ENCODE measurements at regions of chr11 and their contacts with region 1.

Region 1: GRCh38 chr11:8813658-8814057 is 97.3 kb upstream of the AKIP1 start:
- DNase-seq: no peak
- ATAC-seq: peak; percentile 94
- H3K4me3 ChIP-seq: no peak overlapping the region
- H3K27ac ChIP-seq: no peak overlapping the region
- H3K4me1 ChIP-seq: peaks cover 4% of the 10 kb centered on the region
- H3K27me3 ChIP-seq: peaks cover 0 to 2% of the 10 kb centered on the region in 2 experiments; a peak in 2 of 4 replicates
- CTCF ChIP-seq: peak; percentile 80 to 96 (median 89)
- EP300 ChIP-seq: no peak
- POLR2A ChIP-seq: no peak
- RAD21 ChIP-seq: peak; percentile 87

Region 2: DNA sequence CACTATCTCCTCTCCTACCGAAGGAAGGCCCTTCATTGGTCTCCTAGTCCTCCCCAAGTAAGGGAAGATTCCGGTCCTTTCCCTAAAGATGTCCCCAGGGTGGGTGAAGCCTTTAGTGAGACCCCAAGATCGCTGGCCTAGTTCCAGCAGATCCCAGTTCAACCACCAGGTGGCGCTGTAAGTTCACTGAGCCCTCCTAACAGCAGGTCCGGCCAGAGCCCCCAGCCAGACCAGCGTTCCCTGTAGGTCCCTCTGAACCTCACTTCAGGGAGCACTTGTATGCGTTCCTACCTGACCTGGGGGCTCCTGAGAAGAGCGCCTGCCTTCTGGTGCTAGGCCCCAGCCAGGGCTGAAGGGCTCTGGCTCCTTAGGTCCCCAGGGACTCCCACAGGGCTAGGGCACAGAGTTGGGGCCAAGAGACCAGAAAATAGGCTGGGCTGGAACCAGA is 588.0 kb before region 1 on chr11:
- CTCF ChIA-PET with region 1: no interaction called
- POLR2A ChIA-PET with region 1: no interaction called
- RAD21 ChIA-PET with region 1: no interaction called
- SMC1A ChIA-PET with region 1: no interaction called
- in situ Hi-C with region 1: no loop called
- intact Hi-C with region 1: loop called (anchors 2 kb)
- DNase-seq: no peak
- ATAC-seq: peak; percentile 87
- H3K4me3 ChIP-seq: no peak overlapping the region
- H3K27ac ChIP-seq: no peak overlapping the region
- H3K4me1 ChIP-seq: no peaks in the 10 kb centered on the region; the same call in 1 of the 2 replicates
- H3K27me3 ChIP-seq: no peaks in the 10 kb centered on the region
- CTCF ChIP-seq: peak; percentile 88 to 95 (median 90)
- EP300 ChIP-seq: no peak
- POLR2A ChIP-seq: no peak
- RAD21 ChIP-seq: peak; percentile 85

Region 3: GRCh38 chr11:8593935-8594909 is 219.4 kb before region 1 on chr11 and contains the start of gene STK33:
- CTCF ChIA-PET with region 1: interaction called, 3 read pairs
- POLR2A ChIA-PET with region 1: no interaction called
- RAD21 ChIA-PET with region 1: no interaction called
- SMC1A ChIA-PET with region 1: interaction called, 3 read pairs
- in situ Hi-C with region 1: no loop called
- intact Hi-C with region 1: loop called (anchors 10 kb)
- DNase-seq: no peak
- ATAC-seq: peak; percentile 98
- H3K4me3 ChIP-seq: peak within 1 kb of the TSS; percentile 92
- H3K27ac ChIP-seq: peak within 1 kb of the TSS; percentile 84
- H3K4me1 ChIP-seq: peaks cover 3% of the 10 kb centered on the region; the same call in 1 of the 2 replicates
- H3K27me3 ChIP-seq: no peaks in the 10 kb centered on the region
- CTCF ChIP-seq: no peak
- EP300 ChIP-seq: no peak
- POLR2A ChIP-seq: peak; percentile 68
- RAD21 ChIP-seq: no peak
- polyA plus RNA-seq, gene STK33: 5.2 to 8.3 TPM

Region 4: DNA sequence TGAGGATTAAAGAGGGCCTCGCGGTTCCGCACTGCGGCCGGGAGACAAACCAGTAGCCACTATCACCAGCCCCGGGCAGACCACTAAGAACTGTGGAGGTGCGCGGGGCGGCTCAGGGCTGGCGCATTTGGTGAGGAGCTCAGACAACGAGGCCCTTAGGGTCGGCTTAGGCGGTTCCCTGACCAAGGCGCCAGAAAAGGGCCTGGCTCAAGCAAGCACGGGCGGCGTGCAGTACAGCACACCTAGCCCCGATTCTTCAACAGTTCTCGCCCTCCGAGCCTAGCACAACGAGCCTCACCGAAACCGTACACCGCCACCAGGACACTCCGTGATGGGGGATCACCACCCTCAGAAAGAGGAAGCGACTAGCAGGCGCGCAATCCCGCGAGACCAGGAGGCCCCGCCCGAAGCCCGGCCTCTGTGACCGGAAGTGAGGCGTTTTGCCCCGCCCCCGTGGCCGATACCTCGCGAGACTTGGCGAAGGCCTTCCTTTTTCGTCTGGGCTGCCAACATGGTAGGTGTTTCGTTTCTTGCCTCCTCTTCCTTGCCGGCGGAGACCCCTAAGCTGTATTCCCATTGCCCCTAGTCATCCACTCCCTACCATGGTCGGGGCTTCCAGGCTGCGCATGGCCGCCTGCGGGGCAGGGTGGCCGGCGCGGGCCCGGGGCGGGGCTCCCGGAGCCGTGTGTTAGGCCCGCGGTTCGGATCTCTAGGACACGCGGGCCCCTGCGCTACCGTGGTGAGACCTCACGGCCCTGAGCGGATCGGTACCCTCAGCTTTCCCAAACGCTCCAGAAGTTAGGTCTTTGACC is 131.1 kb before region 1 on chr11 and contains the starts of genes RPL27A and TRIM66:
- CTCF ChIA-PET with region 1: no interaction called
- POLR2A ChIA-PET with region 1: interaction called, 3 read pairs
- RAD21 ChIA-PET with region 1: no interaction called
- SMC1A ChIA-PET with region 1: interaction called, 3 read pairs
- in situ Hi-C with region 1: no loop called
- intact Hi-C with region 1: loop called (anchors 1 kb)
- DNase-seq: peak; percentile 82
- ATAC-seq: peak; percentile 94
- H3K4me3 ChIP-seq: peak within 1 kb of the TSS; percentile 88
- H3K27ac ChIP-seq: peak within 1 kb of the TSS; percentile 99
- H3K4me1 ChIP-seq: peaks cover 21% of the 10 kb centered on the region
- H3K27me3 ChIP-seq: no peaks in the 10 kb centered on the region
- CTCF ChIP-seq: no peak
- EP300 ChIP-seq: no peak
- POLR2A ChIP-seq: peak; percentile 97
- RAD21 ChIP-seq: no peak
- polyA plus RNA-seq, gene RPL27A: 978 to 2,052 TPM
- polyA plus RNA-seq, gene TRIM66: 1.7 to 2.4 TPM

Region 5: GRCh38 chr11:8688414-8689362 is 125.0 kb before region 1 on chr11:
- CTCF ChIA-PET with region 1: interaction called, 13 read pairs
- POLR2A ChIA-PET with region 1: no interaction called
- RAD21 ChIA-PET with region 1: interaction called, 4 read pairs
- SMC1A ChIA-PET with region 1: no interaction called
- in situ Hi-C with region 1: no loop called
- intact Hi-C with region 1: loop called (anchors 1 kb)
- DNase-seq: peak; percentile 92
- ATAC-seq: peak; percentile 91
- H3K4me3 ChIP-seq: peak overlapping the region; percentile 88
- H3K27ac ChIP-seq: peak overlapping the region; percentile 88
- H3K4me1 ChIP-seq: peaks cover 31% of the 10 kb centered on the region
- H3K27me3 ChIP-seq: no peaks in the 10 kb centered on the region
- CTCF ChIP-seq: peak in 1 of 3 experiments; percentile 16; a peak in 1 of 6 replicates
- EP300 ChIP-seq: peak in 1 of 2 experiments; percentile 40; a peak in 1 of 4 replicates
- POLR2A ChIP-seq: peak; percentile 92
- RAD21 ChIP-seq: peak; percentile 7; the same call in 1 of the 2 replicates

Region 6: GRCh38 chr11:8832571-8833260 is 19.1 kb after region 1 on chr11:
- CTCF ChIA-PET with region 1: interaction called, 41 read pairs
- POLR2A ChIA-PET with region 1: interaction called, 3 read pairs
- RAD21 ChIA-PET with region 1: interaction called, 6 read pairs
- SMC1A ChIA-PET with region 1: interaction called, 6 read pairs
- in situ Hi-C with region 1: no loop called
- intact Hi-C with region 1: no loop called
- DNase-seq: peak; percentile 90
- ATAC-seq: peak; percentile 97
- H3K4me3 ChIP-seq: no peak overlapping the region
- H3K27ac ChIP-seq: peak overlapping the region; percentile 84
- H3K4me1 ChIP-seq: peaks cover 15% of the 10 kb centered on the region
- H3K27me3 ChIP-seq: no peaks in the 10 kb centered on the region
- CTCF ChIP-seq: peak in 1 of 3 experiments; percentile 12; a peak in 1 of 6 replicates
- EP300 ChIP-seq: no peak
- POLR2A ChIP-seq: peak; percentile 60
- RAD21 ChIP-seq: no peak